PC-3 (cell line): ENCODE measurements at regions of chr19 and their contacts with region 1.

Region 1: DNA sequence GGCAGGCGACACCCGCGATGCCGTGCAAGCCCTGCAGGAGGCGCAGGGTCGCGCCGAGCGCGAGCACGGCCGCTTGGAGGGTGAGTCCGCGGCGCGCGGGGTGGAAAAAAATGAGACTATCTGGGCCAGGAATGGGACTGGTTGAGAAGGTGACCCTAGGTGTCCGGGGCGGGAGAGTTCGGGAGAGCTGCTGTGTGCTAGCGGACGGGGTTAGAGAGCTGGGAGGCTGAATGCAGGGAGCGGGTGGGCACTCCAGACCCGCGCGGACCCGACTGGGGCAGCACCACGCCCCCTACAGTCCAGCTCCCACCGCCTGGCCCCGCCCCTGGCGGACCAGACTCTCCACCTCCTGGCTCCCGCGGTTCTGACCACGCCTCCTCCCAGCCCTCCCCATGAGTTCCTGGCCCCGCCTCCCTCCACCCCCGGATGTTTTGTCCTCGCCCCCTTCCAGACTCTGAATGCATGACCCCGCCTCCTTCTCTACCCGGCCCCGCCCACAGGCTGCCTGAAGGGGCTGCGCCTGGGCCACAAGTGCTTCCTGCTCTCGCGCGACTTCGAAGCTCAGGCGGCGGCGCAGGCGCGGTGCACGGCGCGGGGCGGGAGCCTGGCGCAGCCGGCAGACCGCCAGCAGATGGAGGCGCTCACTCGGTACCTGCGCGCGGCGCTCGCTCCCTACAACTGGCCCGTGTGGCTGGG is 1.5 kb downstream of the CLEC11A start:
- DNase-seq: peak; percentile 100
- ATAC-seq: peak; percentile 87
- H3K4me3 ChIP-seq: peak overlapping the region; percentile 75
- H3K27ac ChIP-seq: peak overlapping the region; percentile 8; the same call in 1 of the 2 replicates
- H3K4me1 ChIP-seq: peaks cover 13% of the 10 kb centered on the region
- H3K27me3 ChIP-seq: no peaks in the 10 kb centered on the region
- CTCF ChIP-seq: peak; percentile 93

Region 2: DNA sequence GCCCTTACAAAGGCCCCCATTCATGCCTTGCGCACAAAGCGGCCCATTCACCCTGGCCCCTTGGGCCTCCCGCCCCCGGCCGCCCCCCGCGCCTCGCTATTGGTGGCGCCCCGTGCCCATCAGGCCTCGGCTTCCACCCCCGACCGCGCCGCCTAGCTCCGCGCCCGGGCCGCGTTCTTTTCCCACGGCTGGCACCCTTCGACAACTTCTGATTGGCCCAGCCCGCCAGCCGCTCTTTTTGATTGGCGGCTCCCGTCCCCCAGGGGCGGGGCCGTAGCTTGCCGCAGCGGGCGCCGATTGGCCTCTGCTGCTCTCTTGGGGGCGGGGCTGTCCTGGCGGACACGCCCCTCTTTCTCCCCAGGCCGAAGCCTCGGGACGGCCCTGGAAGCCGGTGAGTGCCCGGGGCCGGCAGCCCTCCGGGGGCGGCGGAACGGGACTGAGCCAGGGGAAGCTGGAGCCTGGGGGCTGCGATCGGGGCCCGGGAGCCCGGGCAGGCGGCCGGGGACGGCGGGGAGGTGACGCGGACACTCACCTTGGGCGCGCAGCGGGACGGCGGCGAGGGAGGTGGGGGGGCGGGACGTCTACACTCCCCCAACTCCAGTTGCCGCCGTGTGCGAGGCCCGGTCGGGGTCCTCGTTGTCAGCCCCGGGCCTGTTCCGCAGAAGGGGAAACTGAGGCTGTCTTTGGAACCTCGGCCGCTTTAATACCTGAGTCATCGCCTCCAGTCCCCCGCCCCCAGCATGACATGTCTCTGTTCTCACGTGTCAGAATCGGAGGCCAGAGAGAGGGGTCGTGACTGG is 521.2 kb before region 1 on chr19 and contains the start of gene MYH14:
- CTCF ChIA-PET with region 1: interaction called, 10 read pairs
- POLR2A ChIA-PET with region 1: no interaction called
- intact Hi-C with region 1: no loop called
- DNase-seq: peak; percentile 99
- ATAC-seq: peak; percentile 92
- H3K4me3 ChIP-seq: peak within 1 kb of the TSS; percentile 77
- H3K27ac ChIP-seq: no peak within 1 kb of the TSS
- H3K4me1 ChIP-seq: peaks cover 21% of the 10 kb centered on the region
- H3K27me3 ChIP-seq: no peaks in the 10 kb centered on the region
- CTCF ChIP-seq: no peak
- total RNA-seq, gene MYH14: 20.2 and 28.5 TPM in 2 replicates

Region 3: GRCh38 chr19:50705422-50706019 is 19.1 kb before region 1 on chr19:
- CTCF ChIA-PET with region 1: interaction called, 21 read pairs
- POLR2A ChIA-PET with region 1: no interaction called
- intact Hi-C with region 1: no loop called
- DNase-seq: peak; percentile 86
- ATAC-seq: peak; percentile 87
- H3K4me3 ChIP-seq: no peak overlapping the region
- H3K27ac ChIP-seq: no peak overlapping the region
- H3K4me1 ChIP-seq: peaks cover 15% of the 10 kb centered on the region
- H3K27me3 ChIP-seq: peaks cover 19% of the 10 kb centered on the region
- CTCF ChIP-seq: peak; percentile 89

Region 4: DNA sequence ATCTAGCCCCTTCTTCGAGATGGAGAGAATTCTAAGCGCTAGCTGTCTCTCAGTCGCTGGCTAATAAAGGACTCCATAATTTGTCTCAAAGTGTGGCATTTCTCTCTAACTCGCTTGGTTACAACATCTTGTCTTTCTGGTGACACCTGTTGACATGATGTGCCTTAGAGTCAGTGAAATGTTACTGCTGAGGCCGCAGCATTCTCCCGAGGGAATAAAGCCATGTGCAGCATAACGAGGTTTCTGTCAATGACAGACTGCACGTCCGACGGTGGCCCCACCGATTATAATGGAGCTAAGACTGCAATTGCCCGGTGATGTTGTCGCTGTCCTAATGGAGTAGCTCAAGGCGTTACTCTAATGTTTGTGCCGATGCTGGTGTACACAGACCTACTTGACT is 25.3 kb after region 1 on chr19:
- CTCF ChIA-PET with region 1: interaction called, 10 read pairs
- POLR2A ChIA-PET with region 1: no interaction called
- intact Hi-C with region 1: no loop called
- DNase-seq: no peak
- ATAC-seq: no peak
- H3K4me3 ChIP-seq: no peak overlapping the region
- H3K27ac ChIP-seq: no peak overlapping the region
- H3K4me1 ChIP-seq: no peaks in the 10 kb centered on the region
- H3K27me3 ChIP-seq: peaks cover 33% of the 10 kb centered on the region
- CTCF ChIP-seq: no peak